Natural killer cell (primary cell): ENCODE measurements at regions of chr5 and their contacts with region 1.

Region 1: GRCh38 chr5:119287547-119288073 is 68.2 kb upstream of the TNFAIP8 start:
- DNase-seq: peak in 1 of 2 donors; percentile 71
- ATAC-seq: peak; percentile 68 to 77 (median 75)
- H3K4me3 ChIP-seq: no peak overlapping the region
- H3K4me3 Mint-ChIP-seq: peak overlapping the region; percentile 78
- H3K27ac ChIP-seq: peak overlapping the region; percentile 77
- H3K27ac Mint-ChIP-seq: peak overlapping the region; percentile 89
- H3K4me1 ChIP-seq: peaks cover 59% of the 10 kb centered on the region
- H3K4me1 Mint-ChIP-seq: peaks cover 93% of the 10 kb centered on the region in 2 donors
- H3K27me3 ChIP-seq: no peaks in the 10 kb centered on the region
- H3K27me3 Mint-ChIP-seq: no peaks in the 10 kb centered on the region
- CTCF ChIP-seq: no peak

Region 2: GRCh38 chr5:119274767-119275130 is 12.9 kb before region 1 on chr5:
- intact Hi-C with region 1: loop called (anchors 1 kb)
- DNase-seq: peak in 1 of 2 donors; percentile 70
- ATAC-seq: peak in 2 of 3 donors; percentile 20 to 41
- H3K4me3 ChIP-seq: no peak overlapping the region
- H3K4me3 Mint-ChIP-seq: peak overlapping the region; percentile 97
- H3K27ac ChIP-seq: peak overlapping the region; percentile 71
- H3K27ac Mint-ChIP-seq: peak overlapping the region; percentile 89 to 98
- H3K4me1 ChIP-seq: peaks cover 87% of the 10 kb centered on the region
- H3K4me1 Mint-ChIP-seq: peaks cover 97% of the 10 kb centered on the region in 2 donors
- H3K27me3 ChIP-seq: no peaks in the 10 kb centered on the region
- H3K27me3 Mint-ChIP-seq: no peaks in the 10 kb centered on the region
- CTCF ChIP-seq: no peak

Region 3: GRCh38 chr5:119301947-119302346 is 14.3 kb after region 1 on chr5:
- intact Hi-C with region 1: no loop called
- DNase-seq: no peak
- ATAC-seq: no peak
- H3K4me3 ChIP-seq: no peak overlapping the region
- H3K4me3 Mint-ChIP-seq: no peak overlapping the region
- H3K27ac ChIP-seq: no peak overlapping the region
- H3K27ac Mint-ChIP-seq: peak overlapping the region; percentile 77 to 78
- H3K4me1 ChIP-seq: peaks cover 30% of the 10 kb centered on the region
- H3K4me1 Mint-ChIP-seq: peaks cover 76 to 82% of the 10 kb centered on the region in 2 donors
- H3K27me3 ChIP-seq: no peaks in the 10 kb centered on the region
- H3K27me3 Mint-ChIP-seq: no peaks in the 10 kb centered on the region
- CTCF ChIP-seq: no peak